ENCODE measurements at regions of chr4 and their contacts with region 1.

Region 1: DNA sequence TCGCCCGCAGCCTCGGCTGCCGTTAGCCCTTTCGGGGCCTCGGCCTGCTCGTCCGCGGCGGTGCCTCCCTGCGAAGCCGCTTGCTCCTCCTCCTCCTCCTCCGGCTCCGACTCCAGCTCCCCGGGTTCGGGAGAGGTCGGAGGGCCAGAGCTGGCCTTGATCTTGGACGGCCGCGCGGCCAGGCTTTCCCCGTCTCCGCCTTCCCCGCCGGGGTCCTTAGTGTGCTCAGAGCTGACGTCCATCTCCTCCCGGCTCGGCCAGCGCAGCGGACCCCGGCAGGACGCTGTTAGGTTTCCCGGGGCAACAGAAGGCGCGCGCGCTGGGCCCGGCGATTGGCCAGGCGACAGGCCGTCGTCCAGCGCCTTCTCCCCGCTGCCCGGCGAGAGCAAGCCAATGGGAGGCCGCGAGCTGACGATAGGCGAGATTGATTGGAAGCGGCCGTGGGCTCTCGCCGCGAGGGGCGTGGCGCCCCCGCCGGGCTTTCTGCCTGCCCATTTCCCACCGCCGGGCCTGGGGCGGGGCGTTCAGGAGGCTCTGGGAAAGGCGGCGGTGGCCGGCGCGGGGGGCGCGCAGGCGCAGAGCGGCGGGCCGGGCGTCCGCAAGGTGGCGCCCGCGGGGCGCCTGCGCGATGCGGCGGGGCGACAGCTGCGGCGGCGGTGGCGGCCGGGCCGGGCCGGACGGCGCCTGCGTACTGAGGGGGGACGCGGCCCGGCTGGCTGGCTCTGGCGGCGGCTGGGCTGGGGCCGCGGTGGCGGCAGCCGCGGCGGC is at the start of gene TADA2B:
- DNase-seq: peak; percentile 95 to 97
- ATAC-seq: peak; percentile 74 to 78
- H3K4me3 ChIP-seq: peak within 1 kb of the TSS; percentile 85 to 100 (median 98)
- H3K27ac ChIP-seq: peak within 1 kb of the TSS; percentile 94 to 98 (median 98)
- H3K4me1 ChIP-seq: peaks cover 48 to 51% of the 10 kb centered on the region in 2 donors
- H3K27me3 ChIP-seq: no peaks in the 10 kb centered on the region
- CTCF ChIP-seq: peak; percentile 35 to 76 (median 76)
- POLR2A ChIP-seq: peak in 1 of 2 donors; percentile 25
- total RNA-seq, gene TADA2B: 55.4 to 70.2 (median 56.4) TPM

Region 2: GRCh38 chr4:5541169-5541568 is 1501.7 kb before region 1 on chr4:
- in situ Hi-C with region 1: no loop called
- intact Hi-C with region 1: no loop called
- DNase-seq: no peak
- ATAC-seq: no peak
- H3K4me3 ChIP-seq: no peak overlapping the region
- H3K27ac ChIP-seq: no peak overlapping the region
- H3K4me1 ChIP-seq: no peaks in the 10 kb centered on the region
- H3K27me3 ChIP-seq: no peaks in the 10 kb centered on the region
- CTCF ChIP-seq: no peak
- POLR2A ChIP-seq: no peak

Region 3: GRCh38 chr4:6783053-6783981 is 259.6 kb before region 1 on chr4:
- in situ Hi-C with region 1: no loop called
- intact Hi-C with region 1: loop called (anchors 2 kb)
- DNase-seq: peak; percentile 88 to 93
- ATAC-seq: peak; percentile 67 to 72
- H3K4me3 ChIP-seq: peak overlapping the region; percentile 74 to 98 (median 82)
- H3K27ac ChIP-seq: peak overlapping the region; percentile 95 to 100 (median 98)
- H3K4me1 ChIP-seq: peaks cover 58 to 59% of the 10 kb centered on the region in 2 donors
- H3K27me3 ChIP-seq: no peaks in the 10 kb centered on the region
- CTCF ChIP-seq: peak in 4 of 5 experiments; percentile 4 to 42 (median 19)
- POLR2A ChIP-seq: peak; percentile 94 to 95

Region 4: DNA sequence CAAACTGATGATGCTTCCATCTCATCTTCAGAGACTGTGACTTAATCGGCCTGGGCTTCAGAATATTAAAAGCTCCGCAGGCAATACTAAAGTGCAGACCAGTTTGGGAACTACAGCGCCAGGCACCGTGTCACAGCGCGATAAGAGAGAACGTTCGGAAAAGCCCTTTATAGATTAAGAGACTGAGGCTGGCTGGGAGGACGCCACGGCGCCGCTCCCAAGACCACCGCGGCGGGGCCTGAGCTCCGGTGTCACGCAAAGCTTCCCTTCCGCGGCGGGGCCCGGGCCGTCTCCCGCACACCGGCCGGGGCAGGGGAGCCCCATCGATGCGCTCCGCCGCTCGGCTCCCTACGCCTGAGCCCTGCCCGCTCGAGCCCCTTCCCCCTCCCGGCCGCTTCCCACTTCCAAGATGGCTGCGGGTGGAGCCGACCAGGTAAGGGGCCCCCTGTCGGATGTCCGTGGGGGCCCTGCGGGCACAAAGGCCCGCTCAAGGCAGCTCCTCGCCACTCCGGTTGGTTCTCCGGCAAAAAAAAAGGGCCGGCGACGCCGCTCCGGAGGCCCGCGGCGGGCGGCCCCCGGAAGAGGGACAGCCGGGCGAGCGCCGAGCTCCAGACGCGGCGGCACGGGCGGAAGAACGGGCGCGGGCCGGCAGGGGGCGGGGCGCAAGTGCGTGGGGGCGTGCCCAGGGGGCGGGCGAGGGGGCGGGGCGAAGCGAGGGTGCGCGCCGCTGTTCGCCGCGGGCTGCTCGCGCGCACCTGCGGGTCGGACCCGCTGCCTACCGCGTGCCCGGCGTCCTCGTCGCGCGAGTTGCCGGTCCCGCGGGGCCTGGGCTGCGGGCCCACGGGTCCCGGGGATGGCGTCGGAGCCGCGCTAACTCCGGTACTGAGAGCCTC is 133.6 kb before region 1 on chr4 and contains the start of gene TBC1D14:
- in situ Hi-C with region 1: no loop called
- intact Hi-C with region 1: loop called (anchors 1 kb)
- DNase-seq: peak; percentile 85 to 86
- ATAC-seq: peak; percentile 85 to 88
- H3K4me3 ChIP-seq: peak within 1 kb of the TSS; percentile 73 to 100 (median 79)
- H3K27ac ChIP-seq: peak within 1 kb of the TSS; percentile 93 to 100 (median 98)
- H3K4me1 ChIP-seq: peaks cover 38 to 42% of the 10 kb centered on the region in 2 donors
- H3K27me3 ChIP-seq: no peaks in the 10 kb centered on the region
- CTCF ChIP-seq: peak; percentile 5 to 62 (median 36)
- POLR2A ChIP-seq: peak; percentile 81 to 87
- total RNA-seq, gene TBC1D14: 36.0 to 56.2 (median 41.4) TPM

Region 5: GRCh38 chr4:7067452-7068278 is 24.8 kb after region 1 on chr4 and contains the start of gene GRPEL1:
- in situ Hi-C with region 1: no loop called
- intact Hi-C with region 1: loop called (anchors 1 kb)
- DNase-seq: peak; percentile 98 to 100
- ATAC-seq: peak; percentile 95 to 98
- H3K4me3 ChIP-seq: peak within 1 kb of the TSS; percentile 81 to 99 (median 86)
- H3K27ac ChIP-seq: peak within 1 kb of the TSS; percentile 89 to 98 (median 96)
- H3K4me1 ChIP-seq: peaks cover 31 to 33% of the 10 kb centered on the region in 2 donors
- H3K27me3 ChIP-seq: no peaks in the 10 kb centered on the region
- CTCF ChIP-seq: peak in 1 of 5 experiments; percentile 23
- POLR2A ChIP-seq: peak; percentile 99
- total RNA-seq, gene GRPEL1: 28.8 to 58.0 (median 35.8) TPM

Region 6: DNA sequence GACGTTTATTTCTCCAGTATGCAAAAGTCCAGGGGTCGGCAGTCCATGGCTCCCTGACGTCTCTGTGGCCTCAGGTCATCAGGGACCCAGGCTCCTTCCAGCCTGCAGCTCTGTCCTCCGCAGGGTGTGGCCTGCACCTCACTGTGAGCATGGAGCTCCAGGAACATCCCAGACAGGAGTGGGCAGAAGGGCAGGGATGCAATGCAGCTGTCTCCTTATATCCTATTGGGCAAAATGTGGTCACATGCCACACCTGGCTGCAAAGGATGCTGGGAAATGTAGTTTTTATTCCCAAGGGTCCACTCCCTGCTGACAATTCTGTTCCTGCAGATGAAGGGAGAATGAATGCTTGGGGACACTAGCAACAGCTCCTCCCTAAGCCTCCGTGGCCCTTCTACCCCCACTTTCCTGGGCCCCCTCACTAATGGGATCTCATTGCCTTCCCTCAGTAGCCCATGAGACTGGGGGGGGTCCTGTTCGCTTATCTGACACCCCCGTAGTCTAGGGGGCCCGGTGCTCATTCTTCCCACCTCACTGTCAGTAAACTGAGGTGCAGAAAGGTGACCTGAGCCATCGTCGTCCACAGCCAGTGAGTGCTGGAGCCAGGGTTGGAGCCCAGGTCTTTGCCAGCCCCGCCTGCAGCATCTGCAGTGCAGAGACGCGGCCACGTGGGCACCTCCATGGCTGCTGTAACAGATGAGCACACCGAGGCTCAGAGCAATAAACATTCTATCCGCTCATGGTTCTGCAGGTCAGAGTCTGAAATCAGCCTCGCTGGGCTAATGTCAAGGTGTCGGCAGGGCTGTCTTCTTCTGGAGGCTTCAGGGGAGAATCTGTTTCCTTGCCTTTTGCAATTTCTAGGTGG is 30.9 kb after region 1 on chr4:
- in situ Hi-C with region 1: no loop called
- intact Hi-C with region 1: loop called (anchors 1 kb)
- DNase-seq: peak in 1 of 2 donors; percentile 51
- ATAC-seq: peak; percentile 35 to 57
- H3K4me3 ChIP-seq: no peak overlapping the region
- H3K27ac ChIP-seq: peak overlapping the region; percentile 47 to 64 (median 59)
- H3K4me1 ChIP-seq: peaks cover 20 to 26% of the 10 kb centered on the region in 2 donors
- H3K27me3 ChIP-seq: no peaks in the 10 kb centered on the region
- CTCF ChIP-seq: no peak
- POLR2A ChIP-seq: no peak

Region 7: DNA sequence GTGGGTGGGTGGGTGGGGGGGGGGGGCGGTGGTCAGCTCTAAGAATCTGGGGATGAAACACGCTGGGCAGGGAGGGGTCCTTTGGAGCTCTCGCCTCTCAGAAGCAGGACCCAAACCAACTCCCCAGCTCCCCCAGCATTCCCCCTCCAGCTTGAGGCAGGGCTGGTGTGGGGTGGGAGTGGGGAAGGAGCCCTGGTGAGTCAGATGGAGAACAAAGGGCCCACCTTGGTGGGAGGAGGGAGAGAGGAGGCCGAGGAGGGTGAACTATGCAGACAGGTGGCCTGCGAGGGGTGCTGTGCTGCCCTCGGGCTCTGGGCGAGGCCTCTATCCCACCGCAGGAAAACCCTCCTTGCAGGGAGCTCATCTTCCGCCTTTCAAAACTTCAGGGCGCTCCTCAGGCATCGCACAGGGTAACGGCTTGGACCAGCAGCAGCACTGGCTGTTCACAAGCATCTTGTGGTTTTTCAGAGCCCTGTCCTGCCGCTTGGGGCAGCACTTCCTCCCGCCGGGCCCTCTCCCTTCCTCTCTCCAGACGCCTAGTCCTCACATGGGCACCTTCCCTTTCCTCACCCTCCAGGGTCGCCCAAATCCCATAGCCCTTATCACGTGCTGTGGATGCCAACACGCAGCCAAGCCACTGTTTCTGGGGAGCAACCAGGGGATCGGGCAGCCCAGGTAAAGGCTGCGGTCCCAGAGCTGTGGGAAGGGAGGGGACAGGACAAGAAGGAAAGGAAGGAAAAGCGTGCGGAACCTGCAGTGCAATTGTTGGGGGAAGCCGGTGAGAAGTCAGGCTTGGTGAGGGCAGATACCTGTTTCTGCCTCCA is 59.0 kb after region 1 on chr4:
- in situ Hi-C with region 1: no loop called
- intact Hi-C with region 1: loop called (anchors 1 kb)
- DNase-seq: peak; percentile 51 to 67
- ATAC-seq: peak; percentile 57 to 69
- H3K4me3 ChIP-seq: peak overlapping the region; percentile 69 to 87 (median 82)
- H3K27ac ChIP-seq: peak overlapping the region; percentile 83 to 94 (median 92)
- H3K4me1 ChIP-seq: peaks cover 11 to 16% of the 10 kb centered on the region in 2 donors
- H3K27me3 ChIP-seq: no peaks in the 10 kb centered on the region
- CTCF ChIP-seq: peak; percentile 44 to 76 (median 67)
- POLR2A ChIP-seq: no peak